ENCODE measurements at regions of chr15 and their contacts with region 1.

Region 1: DNA sequence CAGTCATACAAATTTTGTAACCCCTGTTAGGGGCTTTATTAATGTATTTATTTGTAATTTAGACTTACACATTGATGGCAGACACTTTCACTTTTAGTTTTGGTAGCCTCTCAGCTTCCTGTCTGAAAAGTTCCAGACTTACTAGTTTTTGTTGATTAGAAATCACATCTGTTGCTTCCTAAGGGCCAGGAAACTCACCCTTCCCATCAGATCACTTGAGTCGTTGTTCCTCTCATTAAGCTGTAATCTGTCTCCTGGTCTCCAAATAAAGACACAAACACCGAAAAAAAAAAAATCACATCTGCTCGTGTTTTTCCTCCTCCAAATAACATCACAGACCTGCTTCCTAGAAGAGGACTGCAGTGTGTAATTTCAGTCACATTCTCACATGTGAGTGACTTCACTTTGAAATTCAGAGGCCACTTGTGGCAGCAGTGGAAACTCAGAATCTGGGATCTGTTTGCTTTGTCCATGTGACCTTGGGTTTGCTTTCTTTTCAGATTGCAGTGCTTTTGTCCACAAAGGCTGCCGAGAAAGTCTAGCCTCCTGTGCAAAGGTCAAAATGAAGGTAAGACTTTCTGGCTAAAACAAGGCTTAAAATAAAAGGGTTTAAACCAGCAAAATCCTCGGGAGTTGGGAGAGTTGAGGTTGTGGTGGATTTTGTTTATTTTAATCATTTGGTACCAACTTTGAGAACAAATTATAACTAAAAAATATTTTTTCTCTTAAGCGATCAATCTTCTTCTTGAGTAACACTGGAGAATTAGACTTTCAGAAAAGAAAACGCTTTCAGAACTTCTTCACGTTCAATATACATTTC is 87.0 kb downstream of the KLHL25 start:
- DNase-seq: peak in 1 of 2 donors; percentile 76
- ATAC-seq: peak; percentile 29 to 60 (median 47)
- H3K4me3 ChIP-seq: peak overlapping the region; percentile 19
- H3K4me3 Mint-ChIP-seq: peak overlapping the region; percentile 87
- H3K27ac ChIP-seq: peak overlapping the region; percentile 98
- H3K27ac Mint-ChIP-seq: peak overlapping the region; percentile 100
- H3K4me1 ChIP-seq: peaks cover 48% of the 10 kb centered on the region
- H3K4me1 Mint-ChIP-seq: peaks cover 73 to 78% of the 10 kb centered on the region in 2 donors
- H3K27me3 ChIP-seq: no peaks in the 10 kb centered on the region
- H3K27me3 Mint-ChIP-seq: no peaks in the 10 kb centered on the region
- CTCF ChIP-seq: no peak

Region 2: DNA sequence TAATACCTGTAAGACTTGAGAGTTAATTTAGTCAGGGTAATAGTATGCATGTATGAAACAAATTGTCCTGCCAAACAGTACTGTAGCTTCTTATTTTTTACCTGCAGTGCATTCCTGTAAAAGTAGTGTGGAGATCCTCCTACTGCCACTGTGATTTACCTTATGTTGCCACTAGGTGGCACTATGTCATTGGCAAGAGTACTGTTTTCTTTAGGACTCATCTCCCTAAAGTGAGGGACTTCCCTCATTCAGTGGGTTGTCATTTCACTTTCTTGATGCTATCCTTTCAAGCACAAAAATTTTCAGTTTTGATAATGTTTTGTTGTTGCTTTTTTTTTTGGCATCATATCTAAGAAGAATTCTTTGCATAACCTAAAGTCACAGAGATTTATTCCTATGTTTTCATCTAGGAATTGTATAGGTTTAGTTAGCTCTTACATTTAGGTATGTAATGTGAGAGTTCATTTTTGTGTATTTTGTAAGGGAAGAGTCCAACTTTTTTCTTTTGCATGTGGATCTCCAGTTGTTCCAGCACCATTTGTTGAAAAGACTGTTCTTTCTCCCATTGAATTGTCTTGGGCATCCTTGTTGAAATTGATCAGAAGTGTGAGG is 221.7 kb before region 1 on chr15:
- intact Hi-C with region 1: loop called (anchors 5 kb)
- DNase-seq: peak in 1 of 2 donors; percentile 87
- ATAC-seq: peak; percentile 96 to 99 (median 98)
- H3K4me3 ChIP-seq: no peak overlapping the region
- H3K4me3 Mint-ChIP-seq: no peak overlapping the region
- H3K27ac ChIP-seq: no peak overlapping the region
- H3K27ac Mint-ChIP-seq: no peak overlapping the region
- H3K4me1 ChIP-seq: no peaks in the 10 kb centered on the region
- H3K4me1 Mint-ChIP-seq: peaks cover 27 to 32% of the 10 kb centered on the region in 2 donors
- H3K27me3 ChIP-seq: no peaks in the 10 kb centered on the region
- H3K27me3 Mint-ChIP-seq: no peaks in the 10 kb centered on the region
- CTCF ChIP-seq: peak; percentile 73

Region 3: DNA sequence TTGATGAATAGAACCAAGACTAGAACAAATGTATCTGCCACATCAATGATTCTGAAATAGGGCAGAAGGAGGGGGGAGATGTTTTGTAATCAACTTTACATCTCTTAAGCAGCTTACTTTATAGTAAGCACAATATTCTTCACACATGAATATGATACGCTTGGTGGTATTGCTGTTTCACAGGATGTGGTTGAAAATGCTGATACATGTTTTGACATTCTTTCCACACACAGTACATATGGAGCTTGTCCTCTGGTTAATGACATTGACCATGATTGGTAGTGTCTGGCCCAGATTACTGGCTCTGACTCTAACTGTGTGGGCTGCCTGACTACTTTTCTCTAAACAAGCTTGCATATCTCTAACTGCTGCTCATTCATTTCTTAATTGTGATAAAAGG is 81.9 kb before region 1 on chr15:
- intact Hi-C with region 1: loop called (anchors 1 kb)
- DNase-seq: peak in 1 of 2 donors; percentile 73
- ATAC-seq: peak; percentile 81 to 95 (median 89)
- H3K4me3 ChIP-seq: no peak overlapping the region
- H3K4me3 Mint-ChIP-seq: peak overlapping the region; percentile 71
- H3K27ac ChIP-seq: peak overlapping the region; percentile 83
- H3K27ac Mint-ChIP-seq: peak overlapping the region; percentile 88 to 94
- H3K4me1 ChIP-seq: peaks cover 16% of the 10 kb centered on the region
- H3K4me1 Mint-ChIP-seq: peaks cover 74 to 78% of the 10 kb centered on the region in 2 donors
- H3K27me3 ChIP-seq: no peaks in the 10 kb centered on the region
- H3K27me3 Mint-ChIP-seq: no peaks in the 10 kb centered on the region
- CTCF ChIP-seq: no peak

Measured in natural killer cell (primary cell).